Activated B cell treated with CpG ODN at 0.5 μM for 24 hours (primary cell): ENCODE measurements at regions of chr3 and their contacts with region 1.

Region 1: GRCh38 chr3:3089017-3089416 is 21.2 kb downstream of the IL5RA start:
- DNase-seq: no peak
- ATAC-seq: peak; percentile 98
- H3K4me3 Mint-ChIP-seq: no peak overlapping the region
- H3K27ac Mint-ChIP-seq: peak overlapping the region; percentile 63
- H3K4me1 Mint-ChIP-seq: peaks cover 20% of the 10 kb centered on the region
- H3K27me3 Mint-ChIP-seq: peaks cover 1% of the 10 kb centered on the region
- CTCF ChIP-seq: no peak

Region 2: GRCh38 chr3:3110299-3110630 is 21.2 kb after region 1 on chr3 and contains the start of gene IL5RA:
- CTCF ChIA-PET with region 1: no interaction called
- POLR2A ChIA-PET with region 1: no interaction called
- intact Hi-C with region 1: loop called (anchors 2 kb)
- DNase-seq: no peak
- ATAC-seq: peak; percentile 56
- H3K4me3 Mint-ChIP-seq: peak within 1 kb of the TSS; percentile 35
- H3K27ac Mint-ChIP-seq: peak within 1 kb of the TSS; percentile 59
- H3K4me1 Mint-ChIP-seq: peaks cover 37% of the 10 kb centered on the region
- H3K27me3 Mint-ChIP-seq: peaks cover 3% of the 10 kb centered on the region
- CTCF ChIP-seq: no peak
- total RNA-seq, gene IL5RA: not detected in 2 replicates

Region 3: DNA sequence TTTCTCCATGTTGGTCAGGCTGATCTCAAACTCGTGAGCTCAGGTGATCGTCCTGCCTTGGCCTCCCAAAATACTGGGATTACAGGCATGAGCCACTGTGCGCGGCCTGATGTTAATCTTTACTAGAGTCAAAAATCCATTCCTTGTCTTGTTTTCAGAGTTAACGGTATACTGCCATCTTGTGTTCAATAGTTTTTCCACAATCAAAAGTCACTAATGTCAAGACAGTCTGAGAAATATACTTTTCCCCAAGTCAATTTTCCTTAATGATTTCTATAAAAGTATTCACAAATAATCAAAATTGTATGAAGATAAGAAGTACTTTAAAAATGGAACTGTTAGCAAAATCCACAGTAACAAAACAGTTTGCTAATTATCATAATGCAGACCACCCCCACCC is 82.0 kb after region 1 on chr3:
- CTCF ChIA-PET with region 1: no interaction called
- POLR2A ChIA-PET with region 1: no interaction called
- intact Hi-C with region 1: loop called (anchors 5 kb)
- DNase-seq: no peak
- ATAC-seq: no peak
- H3K4me3 Mint-ChIP-seq: no peak overlapping the region
- H3K27ac Mint-ChIP-seq: no peak overlapping the region
- H3K4me1 Mint-ChIP-seq: peaks cover 34% of the 10 kb centered on the region
- H3K27me3 Mint-ChIP-seq: no peaks in the 10 kb centered on the region
- CTCF ChIP-seq: no peak

Region 4: DNA sequence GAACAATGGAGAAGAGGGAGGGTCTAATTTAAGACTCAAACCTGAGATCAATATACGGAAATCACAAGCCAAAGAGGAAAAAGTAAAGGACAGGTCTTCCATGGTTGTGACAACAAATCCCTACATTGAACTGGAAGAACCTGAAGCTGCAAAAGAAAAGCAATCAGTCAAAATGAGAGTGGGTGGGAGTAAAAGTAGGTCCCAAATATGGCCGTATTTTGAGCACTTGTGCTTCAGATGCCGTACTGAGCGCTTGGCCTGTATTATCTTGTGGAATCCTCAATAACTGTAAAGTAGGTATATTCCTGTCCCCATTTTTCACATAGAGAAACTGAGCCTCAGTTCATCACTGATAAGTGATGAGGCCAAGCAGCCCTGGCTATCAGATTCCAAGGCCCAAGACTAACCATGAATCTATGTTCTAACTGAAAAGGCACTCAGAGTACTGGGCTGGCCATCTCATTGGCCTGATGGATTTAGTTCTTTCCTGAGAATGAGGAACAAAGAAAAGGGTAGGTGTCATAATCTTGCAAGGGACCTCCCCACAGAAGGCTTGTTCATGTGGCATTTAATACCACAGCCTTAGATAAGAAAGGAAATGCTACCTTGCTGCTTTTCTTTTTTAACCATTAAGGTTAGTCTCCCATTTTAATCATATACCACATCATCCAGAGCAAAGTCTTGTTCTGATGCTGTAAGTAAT is 762.8 kb after region 1 on chr3:
- CTCF ChIA-PET with region 1: no interaction called
- POLR2A ChIA-PET with region 1: no interaction called
- intact Hi-C with region 1: no loop called
- DNase-seq: no peak
- ATAC-seq: peak; percentile 81
- H3K4me3 Mint-ChIP-seq: no peak overlapping the region
- H3K27ac Mint-ChIP-seq: no peak overlapping the region
- H3K4me1 Mint-ChIP-seq: peaks cover 11% of the 10 kb centered on the region
- H3K27me3 Mint-ChIP-seq: no peaks in the 10 kb centered on the region
- CTCF ChIP-seq: no peak